ENCODE measurements at regions of chr6 and their contacts with region 1.

Region 1: GRCh38 chr6:115896538-115897129 is 164.1 kb downstream of the FRK start:
- DNase-seq: peak; percentile 14
- ATAC-seq: peak; percentile 73
- H3K4me3 ChIP-seq: no peak overlapping the region
- H3K27ac ChIP-seq: no peak overlapping the region
- H3K4me1 ChIP-seq: peaks cover 8% of the 10 kb centered on the region
- H3K27me3 ChIP-seq: no peaks in the 10 kb centered on the region; a peak in 1 of 5 replicates
- CTCF ChIP-seq: peak; percentile 68
- EP300 ChIP-seq: no peak
- POLR2A ChIP-seq: no peak
- RAD21 ChIP-seq: peak; percentile 29; the same call in 1 of the 2 replicates

Region 2: DNA sequence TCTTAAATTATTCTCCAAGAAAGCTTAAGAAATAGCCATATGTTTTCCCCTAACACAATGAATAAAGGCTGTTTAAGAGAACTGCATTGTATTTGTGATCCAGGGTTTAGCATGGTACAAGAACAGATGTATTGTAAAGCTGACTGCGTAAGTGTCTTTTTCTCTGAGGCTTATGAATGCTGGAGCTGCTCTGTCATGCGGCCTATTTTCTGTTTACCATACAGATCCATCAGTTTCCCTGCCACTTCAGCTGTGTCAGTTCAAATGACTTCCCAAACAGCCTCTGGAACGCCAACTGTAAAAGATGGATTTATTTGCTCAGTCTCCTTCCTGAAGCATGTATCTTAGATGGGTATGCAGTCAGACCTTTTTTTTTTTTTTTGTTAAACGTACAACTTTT is 1134.5 kb before region 1 on chr6:
- CTCF ChIA-PET with region 1: no interaction called
- POLR2A ChIA-PET with region 1: no interaction called
- in situ Hi-C with region 1: loop called (anchors 25 kb)
- intact Hi-C with region 1: no loop called
- DNase-seq: no peak
- ATAC-seq: no peak
- H3K4me3 ChIP-seq: no peak overlapping the region
- H3K27ac ChIP-seq: no peak overlapping the region
- H3K4me1 ChIP-seq: no peaks in the 10 kb centered on the region
- H3K27me3 ChIP-seq: no peaks in the 10 kb centered on the region
- CTCF ChIP-seq: no peak
- EP300 ChIP-seq: no peak
- POLR2A ChIP-seq: no peak
- RAD21 ChIP-seq: no peak

Region 3: GRCh38 chr6:115677198-115677597 is 219.4 kb before region 1 on chr6:
- CTCF ChIA-PET with region 1: no interaction called
- POLR2A ChIA-PET with region 1: no interaction called
- in situ Hi-C with region 1: no loop called
- intact Hi-C with region 1: no loop called
- DNase-seq: no peak
- ATAC-seq: no peak
- H3K4me3 ChIP-seq: no peak overlapping the region
- H3K27ac ChIP-seq: no peak overlapping the region
- H3K4me1 ChIP-seq: no peaks in the 10 kb centered on the region
- H3K27me3 ChIP-seq: no peaks in the 10 kb centered on the region
- CTCF ChIP-seq: no peak
- EP300 ChIP-seq: no peak
- POLR2A ChIP-seq: no peak
- RAD21 ChIP-seq: no peak

Region 4: DNA sequence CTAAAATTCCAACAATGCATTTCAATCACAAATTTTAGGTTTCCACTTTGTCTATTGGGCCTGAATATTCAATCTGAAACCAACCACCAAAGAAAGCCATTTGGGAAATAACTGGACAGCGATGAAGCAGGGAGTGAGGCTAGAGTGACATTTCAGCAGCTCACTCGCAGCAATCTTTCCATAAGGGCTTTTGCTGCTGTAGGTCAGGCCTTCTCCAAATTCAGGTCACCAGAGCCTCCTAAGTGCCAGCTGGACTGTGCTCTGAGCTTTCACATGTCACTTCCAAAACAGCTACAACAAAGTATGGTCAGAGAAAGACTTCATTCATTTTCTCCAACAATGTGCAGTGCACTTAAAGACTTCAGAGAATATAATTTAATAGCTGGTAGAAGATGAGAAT is 30.7 kb before region 1 on chr6:
- CTCF ChIA-PET with region 1: no interaction called
- POLR2A ChIA-PET with region 1: no interaction called
- in situ Hi-C with region 1: no loop called
- intact Hi-C with region 1: no loop called
- DNase-seq: no peak
- ATAC-seq: no peak
- H3K4me3 ChIP-seq: no peak overlapping the region
- H3K27ac ChIP-seq: no peak overlapping the region
- H3K4me1 ChIP-seq: no peaks in the 10 kb centered on the region
- H3K27me3 ChIP-seq: no peaks in the 10 kb centered on the region
- CTCF ChIP-seq: no peak
- EP300 ChIP-seq: no peak
- POLR2A ChIP-seq: no peak
- RAD21 ChIP-seq: no peak